OCI-LY7 (cell line): ENCODE measurements at regions of chr10 and their contacts with region 1.

Region 1: DNA sequence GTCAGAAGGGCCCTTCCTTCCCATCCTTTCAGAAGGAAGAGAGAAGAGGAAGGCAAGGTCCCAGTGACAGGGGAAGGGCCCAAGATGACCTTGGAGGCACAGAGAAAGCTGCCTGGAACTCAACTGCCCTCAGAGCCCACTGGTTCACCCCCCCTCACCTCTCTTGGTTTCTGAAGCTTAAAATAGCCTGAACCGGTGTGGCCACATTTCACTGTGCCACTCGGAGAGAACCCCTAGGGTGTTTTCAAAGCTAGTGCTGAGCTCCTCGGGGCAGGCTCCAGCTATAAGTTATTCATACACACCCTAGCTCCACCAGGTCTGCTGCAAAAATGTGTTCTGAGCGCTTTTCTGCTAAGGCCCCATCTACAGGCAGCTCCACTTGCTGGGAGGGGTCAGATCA is 60.9 kb upstream of the ADRB1 start:
- DNase-seq: peak; percentile 67
- H3K4me3 ChIP-seq: no peak overlapping the region
- H3K27ac ChIP-seq: peak overlapping the region; percentile 37
- H3K4me1 ChIP-seq: peaks cover 22% of the 10 kb centered on the region
- CTCF ChIP-seq: no peak

Region 2: GRCh38 chr10:113958631-113959382 is 24.0 kb before region 1 on chr10:
- CTCF ChIA-PET with region 1: interaction called, 3 read pairs
- POLR2A ChIA-PET with region 1: interaction called, 25 read pairs
- intact Hi-C with region 1: loop called (anchors 2 kb)
- DNase-seq: no peak
- H3K4me3 ChIP-seq: no peak overlapping the region
- H3K27ac ChIP-seq: peak overlapping the region; percentile 88
- H3K4me1 ChIP-seq: peaks cover 51% of the 10 kb centered on the region
- CTCF ChIP-seq: no peak

Region 3: GRCh38 chr10:113965683-113966082 is 17.1 kb before region 1 on chr10:
- CTCF ChIA-PET with region 1: interaction called, 3 read pairs
- POLR2A ChIA-PET with region 1: interaction called, 25 read pairs
- intact Hi-C with region 1: loop called (anchors 2 kb)
- DNase-seq: peak; percentile 39
- H3K4me3 ChIP-seq: peak overlapping the region; percentile 37
- H3K27ac ChIP-seq: peak overlapping the region; percentile 55
- H3K4me1 ChIP-seq: peaks cover 61% of the 10 kb centered on the region
- CTCF ChIP-seq: no peak

Region 4: GRCh38 chr10:113993489-113993991 is 10.8 kb after region 1 on chr10:
- CTCF ChIA-PET with region 1: interaction called, 3 read pairs
- POLR2A ChIA-PET with region 1: interaction called, 18 read pairs
- intact Hi-C with region 1: no loop called
- DNase-seq: no peak
- H3K4me3 ChIP-seq: no peak overlapping the region
- H3K27ac ChIP-seq: no peak overlapping the region
- H3K4me1 ChIP-seq: peaks cover 7% of the 10 kb centered on the region
- CTCF ChIP-seq: no peak